HepG2 (cell line): ENCODE measurements at regions of chr2 and their contacts with region 1.

Region 1: DNA sequence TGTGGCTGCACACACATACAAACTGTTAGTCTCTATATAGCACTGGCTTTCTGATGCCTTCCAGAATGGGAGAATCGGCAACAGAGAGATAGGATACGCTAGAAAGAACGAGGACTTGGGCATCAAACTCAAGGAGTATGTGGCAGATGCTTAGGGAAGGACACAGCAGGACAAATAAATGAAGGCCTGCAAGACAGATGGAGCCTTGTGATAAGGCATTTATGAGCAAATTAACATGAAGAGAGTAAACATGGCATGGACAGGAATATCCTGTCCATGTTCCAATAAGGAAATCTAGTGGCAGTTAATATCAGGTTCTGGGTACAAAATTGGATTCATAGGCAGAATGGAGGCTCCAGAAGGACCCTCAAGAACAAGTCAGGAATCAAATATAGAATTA is 137.0 kb downstream of the SLC4A10 start:
- DNase-seq: no peak
- ATAC-seq: no peak
- H3K4me3 ChIP-seq: no peak overlapping the region
- H3K27ac ChIP-seq: no peak overlapping the region
- H3K4me1 ChIP-seq: no peaks in the 10 kb centered on the region
- H3K27me3 ChIP-seq: no peaks in the 10 kb centered on the region
- CTCF ChIP-seq: no peak
- EP300 ChIP-seq: no peak
- POLR2A ChIP-seq: no peak
- RAD21 ChIP-seq: no peak

Region 2: GRCh38 chr2:161695225-161695624 is 65.9 kb before region 1 on chr2:
- CTCF ChIA-PET with region 1: no interaction called
- POLR2A ChIA-PET with region 1: no interaction called
- in situ Hi-C with region 1: no loop called
- intact Hi-C with region 1: loop called (anchors 2 kb)
- DNase-seq: no peak
- ATAC-seq: no peak
- H3K4me3 ChIP-seq: no peak overlapping the region
- H3K27ac ChIP-seq: no peak overlapping the region
- H3K4me1 ChIP-seq: no peaks in the 10 kb centered on the region
- H3K27me3 ChIP-seq: no peaks in the 10 kb centered on the region
- CTCF ChIP-seq: no peak
- EP300 ChIP-seq: no peak
- POLR2A ChIP-seq: no peak
- RAD21 ChIP-seq: no peak

Region 3: DNA sequence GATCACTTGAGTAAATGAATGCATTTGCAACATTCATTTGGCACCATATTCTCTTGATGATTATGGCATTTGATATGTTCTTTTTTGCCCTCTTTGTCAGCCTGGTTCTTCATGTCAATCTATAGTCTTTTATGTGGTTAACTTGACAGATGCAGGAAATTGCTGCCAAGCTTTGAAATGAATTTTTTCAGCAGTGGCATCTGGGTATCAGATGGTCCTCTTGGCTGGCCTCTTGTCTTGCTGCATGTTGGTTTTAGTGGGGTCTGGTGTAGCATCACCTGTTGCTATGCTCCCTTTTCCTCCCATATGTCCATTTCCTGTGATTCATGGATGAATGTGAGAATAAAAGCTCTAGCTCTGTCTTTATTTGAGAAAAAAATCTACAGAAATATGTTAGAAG is 192.9 kb after region 1 on chr2:
- CTCF ChIA-PET with region 1: no interaction called
- POLR2A ChIA-PET with region 1: no interaction called
- in situ Hi-C with region 1: no loop called
- intact Hi-C with region 1: no loop called
- DNase-seq: no peak
- ATAC-seq: no peak
- H3K4me3 ChIP-seq: no peak overlapping the region
- H3K27ac ChIP-seq: no peak overlapping the region
- H3K4me1 ChIP-seq: no peaks in the 10 kb centered on the region
- H3K27me3 ChIP-seq: no peaks in the 10 kb centered on the region
- CTCF ChIP-seq: no peak
- EP300 ChIP-seq: no peak
- POLR2A ChIP-seq: no peak
- RAD21 ChIP-seq: no peak